AG04450 (cell line): ENCODE measurements at regions of chr1 and their contacts with region 1.

Region 1: GRCh38 chr1:110780600-110781484 is 92.1 kb upstream of the CD53 start:
- DNase-seq: peak; percentile 20
- H3K4me3 ChIP-seq: no peak overlapping the region
- H3K27ac ChIP-seq: no peak overlapping the region
- H3K27me3 ChIP-seq: peaks cover 3% of the 10 kb centered on the region
- CTCF ChIP-seq: peak; percentile 71

Region 2: GRCh38 chr1:110619412-110620249 is 161.2 kb before region 1 on chr1:
- CTCF ChIA-PET with region 1: interaction called, 16 read pairs
- POLR2A ChIA-PET with region 1: no interaction called
- DNase-seq: peak; percentile 8
- H3K4me3 ChIP-seq: no peak overlapping the region
- H3K27ac ChIP-seq: no peak overlapping the region
- H3K27me3 ChIP-seq: peaks cover 2% of the 10 kb centered on the region
- CTCF ChIP-seq: peak; percentile 84

Region 3: DNA sequence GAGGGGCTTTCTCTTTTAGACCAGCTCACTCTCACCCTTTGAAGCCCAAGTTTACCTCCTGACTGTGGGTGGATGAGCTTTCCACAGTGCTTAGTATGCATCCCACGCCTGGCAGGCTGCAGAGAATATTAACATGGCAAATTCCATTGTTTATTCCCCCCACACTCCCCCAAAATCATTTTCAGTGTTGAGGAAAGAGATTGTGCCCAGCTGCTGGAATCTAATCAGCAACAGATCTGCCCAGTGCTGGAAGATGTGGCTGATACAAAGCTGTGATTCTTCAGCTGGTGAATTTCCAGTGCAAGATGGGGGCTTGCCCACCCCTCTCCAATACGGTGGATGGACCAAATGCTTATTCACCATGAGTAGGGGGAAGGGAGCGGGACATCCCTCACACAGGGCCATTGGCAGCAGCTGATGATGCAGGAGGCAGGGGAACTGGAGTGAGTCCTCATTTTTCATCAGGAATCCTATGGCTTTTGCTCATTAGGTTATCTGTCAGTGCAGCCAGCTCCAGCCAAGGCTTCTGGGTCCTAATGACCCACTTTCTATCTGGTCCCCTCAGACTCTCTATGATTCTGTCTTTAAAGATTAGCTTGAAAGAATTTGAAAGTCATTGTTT is 66.4 kb before region 1 on chr1:
- CTCF ChIA-PET with region 1: no interaction called
- POLR2A ChIA-PET with region 1: no interaction called
- DNase-seq: no peak
- H3K4me3 ChIP-seq: no peak overlapping the region
- H3K27ac ChIP-seq: no peak overlapping the region
- H3K27me3 ChIP-seq: no peaks in the 10 kb centered on the region
- CTCF ChIP-seq: no peak

Region 4: DNA sequence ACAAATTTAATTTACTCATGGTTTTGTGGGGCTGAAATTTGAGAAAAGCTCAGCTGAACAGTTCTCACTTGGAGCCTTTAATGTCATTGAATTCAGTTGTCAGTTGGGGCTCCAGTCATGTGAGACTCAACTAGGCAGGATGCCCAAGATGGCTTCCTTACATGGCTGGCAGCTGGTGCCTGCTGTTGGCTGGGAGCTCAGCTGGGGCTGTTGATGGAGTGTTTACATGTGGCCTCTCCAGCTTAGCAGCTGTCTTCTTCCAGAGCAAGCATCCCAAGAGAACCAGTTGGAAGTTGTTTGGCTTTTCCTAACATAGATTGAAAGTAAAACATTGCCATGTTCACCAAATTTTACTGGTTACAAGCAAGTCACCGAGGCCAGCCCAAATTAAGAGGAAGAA is 24.3 kb before region 1 on chr1:
- CTCF ChIA-PET with region 1: interaction called, 13 read pairs
- POLR2A ChIA-PET with region 1: no interaction called
- DNase-seq: no peak
- H3K4me3 ChIP-seq: no peak overlapping the region
- H3K27ac ChIP-seq: no peak overlapping the region
- H3K27me3 ChIP-seq: no peaks in the 10 kb centered on the region
- CTCF ChIP-seq: no peak

Region 5: DNA sequence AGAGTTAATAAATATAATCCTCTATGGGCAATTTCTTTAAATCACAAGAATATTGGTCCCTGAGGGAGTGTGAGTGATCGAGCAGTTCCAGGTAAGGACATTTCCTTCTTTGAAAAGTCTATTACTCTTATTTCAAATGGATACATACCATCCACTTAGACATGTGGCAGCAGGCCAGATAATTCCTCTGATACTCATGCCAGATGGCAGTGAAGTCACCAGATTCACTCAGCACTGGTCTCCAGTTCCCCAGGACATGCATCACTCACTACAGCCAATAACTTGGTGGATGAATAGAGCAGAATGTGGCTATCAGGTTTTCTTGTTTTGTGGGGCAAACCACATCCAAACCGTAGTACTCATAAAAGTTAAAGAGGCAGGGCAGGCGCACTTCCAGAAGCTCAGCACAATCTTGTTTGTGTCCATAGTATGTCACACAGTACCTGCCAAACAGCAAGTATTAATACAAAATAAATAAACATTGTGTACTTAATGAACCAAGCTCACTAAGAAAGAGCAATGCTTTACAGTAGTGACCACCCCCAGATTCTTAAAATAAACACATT is 17.9 kb after region 1 on chr1:
- CTCF ChIA-PET with region 1: interaction called, 16 read pairs
- POLR2A ChIA-PET with region 1: no interaction called
- DNase-seq: no peak
- H3K4me3 ChIP-seq: no peak overlapping the region
- H3K27ac ChIP-seq: no peak overlapping the region
- H3K27me3 ChIP-seq: no peaks in the 10 kb centered on the region
- CTCF ChIP-seq: no peak